Ascending aorta (tissue), 2 donors: ENCODE measurements at regions of chr12 and their contacts with region 1.

Region 1: DNA sequence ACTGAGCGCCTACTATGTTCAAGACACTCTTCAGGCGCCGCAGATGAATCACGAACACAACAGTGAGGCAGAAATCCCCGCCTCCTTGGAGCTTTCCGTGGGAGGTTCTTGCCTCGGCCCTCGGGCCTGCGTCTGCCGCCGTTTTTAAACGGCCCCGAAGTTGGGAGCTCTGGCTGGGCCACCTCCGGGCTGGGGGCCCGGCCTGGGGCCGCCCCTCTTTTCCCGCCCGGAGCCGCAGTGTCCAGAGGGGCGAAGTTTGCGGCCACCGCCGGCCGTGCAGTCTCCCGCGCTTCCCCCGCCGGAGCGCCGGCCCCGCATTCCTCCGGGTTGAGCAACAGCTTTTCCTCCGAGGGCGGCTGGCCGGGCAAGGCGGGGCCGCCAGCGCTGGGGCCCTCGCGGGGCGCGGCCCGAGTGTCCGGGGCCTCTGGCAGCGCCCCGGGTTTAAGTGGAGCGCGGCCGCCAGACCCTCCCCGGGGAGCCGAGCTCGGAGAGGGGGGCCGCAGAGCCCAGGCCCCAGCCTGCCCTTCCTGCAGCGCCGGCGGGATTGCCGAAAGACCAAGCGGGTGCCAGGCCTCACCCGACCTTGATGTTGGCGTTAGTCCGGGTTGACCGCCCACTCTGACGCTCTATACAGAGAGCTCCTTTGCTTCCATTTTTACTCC is 18.7 kb upstream of the CTDSP2 start:
- DNase-seq: peak; percentile 53 to 94
- H3K4me3 ChIP-seq: peak overlapping the region; percentile 54 to 71
- H3K27ac ChIP-seq: peak overlapping the region; percentile 94 to 96
- H3K4me1 ChIP-seq: peaks cover 13 to 39% of the 10 kb centered on the region in 2 donors
- H3K27me3 ChIP-seq: no peaks in the 10 kb centered on the region
- CTCF ChIP-seq: no peak

Region 2: DNA sequence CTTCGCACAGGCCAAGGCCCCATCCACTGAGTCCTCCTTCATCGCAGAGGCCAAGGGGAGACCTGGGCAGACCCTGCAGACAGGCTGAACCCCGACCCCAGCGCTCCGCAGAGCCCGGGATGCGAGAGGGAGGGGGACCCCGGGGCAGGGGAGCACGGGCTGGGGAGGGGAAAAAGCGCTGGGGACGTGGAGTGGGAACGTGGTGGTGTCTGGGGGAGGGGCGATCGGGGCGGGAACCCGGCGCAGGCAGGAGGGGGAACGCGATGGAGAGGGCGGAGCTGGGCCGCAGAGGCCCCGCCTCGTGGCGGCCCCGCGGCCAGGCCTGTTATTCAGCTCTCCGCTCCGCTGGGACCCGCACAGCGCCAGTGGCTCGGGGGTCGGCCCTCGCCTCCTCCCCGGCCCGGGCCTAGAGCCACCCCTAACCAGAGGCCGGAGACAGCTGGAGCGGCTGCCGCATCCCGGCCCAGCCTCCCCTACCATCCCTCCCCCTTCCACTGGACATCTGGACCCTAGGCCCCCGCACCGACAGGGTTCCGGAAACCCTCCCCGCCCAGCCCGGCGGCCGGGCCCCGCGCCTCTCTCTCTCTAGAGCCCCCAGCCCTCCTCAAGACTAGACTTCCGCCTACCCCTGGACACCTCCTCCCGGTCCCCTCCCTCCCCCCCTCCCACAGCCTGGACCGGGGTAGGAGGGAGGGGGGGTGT is 254.0 kb before region 1 on chr12 and contains the start of gene ARHGEF25:
- intact Hi-C with region 1: no loop called
- DNase-seq: peak in 1 of 2 donors; percentile 86
- H3K4me3 ChIP-seq: peak within 1 kb of the TSS; percentile 70 to 88
- H3K27ac ChIP-seq: peak within 1 kb of the TSS; percentile 87 to 97
- H3K4me1 ChIP-seq: peaks cover 6 to 39% of the 10 kb centered on the region in 2 donors
- H3K27me3 ChIP-seq: no peaks in the 10 kb centered on the region
- CTCF ChIP-seq: no peak
- total RNA-seq, gene ARHGEF25: 47.8 TPM

Region 3: DNA sequence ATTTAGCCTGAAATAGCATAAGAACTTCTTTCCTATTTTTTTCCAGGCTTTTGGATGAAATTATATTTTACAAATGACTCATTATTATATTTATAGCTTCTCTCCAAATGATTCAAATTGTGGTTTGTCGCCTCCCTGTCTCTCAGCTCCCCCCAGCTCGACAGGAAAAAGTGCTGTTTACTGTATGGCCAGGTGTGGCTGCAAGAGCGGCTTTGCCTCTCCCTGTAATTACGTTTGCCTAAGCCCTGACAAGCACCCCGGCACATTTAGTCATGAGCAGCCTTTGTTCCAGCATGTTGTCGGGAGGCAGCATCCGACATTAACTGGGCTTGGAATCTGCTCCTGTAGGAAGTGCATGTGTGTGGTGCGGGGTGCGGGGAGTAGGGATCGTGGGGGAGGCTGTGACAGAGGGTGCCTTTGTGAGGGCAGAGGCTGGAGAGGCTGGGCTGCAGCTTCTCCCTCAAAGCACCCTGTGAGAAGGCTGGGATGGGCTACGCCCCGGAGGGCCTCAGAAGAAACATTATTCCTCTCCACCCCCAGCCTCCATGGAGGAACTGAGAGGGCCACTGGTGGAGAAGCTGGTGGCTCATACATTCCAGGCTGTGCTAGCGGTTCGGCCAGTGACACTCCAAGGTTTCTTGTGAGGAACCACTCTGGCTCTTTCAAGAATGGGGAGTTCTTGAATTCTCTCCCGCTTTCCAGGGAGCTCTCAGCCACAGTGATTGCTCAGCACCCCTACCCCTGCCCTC is 23.4 kb after region 1 on chr12:
- intact Hi-C with region 1: loop called (anchors 1 kb)
- DNase-seq: peak in 1 of 2 donors; percentile 85
- H3K4me3 ChIP-seq: peak overlapping the region; percentile 11 to 54
- H3K27ac ChIP-seq: peak overlapping the region; percentile 98 to 99
- H3K4me1 ChIP-seq: peaks cover 39 to 67% of the 10 kb centered on the region in 2 donors
- H3K27me3 ChIP-seq: no peaks in the 10 kb centered on the region
- CTCF ChIP-seq: no peak

Region 4: GRCh38 chr12:57896434-57897201 is 31.4 kb after region 1 on chr12:
- intact Hi-C with region 1: loop called (anchors 2 kb)
- DNase-seq: peak in 1 of 2 donors; percentile 87
- H3K4me3 ChIP-seq: peak overlapping the region; percentile 67 to 72
- H3K27ac ChIP-seq: peak overlapping the region; percentile 98 to 99
- H3K4me1 ChIP-seq: peaks cover 51 to 69% of the 10 kb centered on the region in 2 donors
- H3K27me3 ChIP-seq: no peaks in the 10 kb centered on the region
- CTCF ChIP-seq: peak in 2 of 3 experiments; percentile 29 to 67